ENCODE measurements at regions of chr21 and their contacts with region 1.

Region 1: DNA sequence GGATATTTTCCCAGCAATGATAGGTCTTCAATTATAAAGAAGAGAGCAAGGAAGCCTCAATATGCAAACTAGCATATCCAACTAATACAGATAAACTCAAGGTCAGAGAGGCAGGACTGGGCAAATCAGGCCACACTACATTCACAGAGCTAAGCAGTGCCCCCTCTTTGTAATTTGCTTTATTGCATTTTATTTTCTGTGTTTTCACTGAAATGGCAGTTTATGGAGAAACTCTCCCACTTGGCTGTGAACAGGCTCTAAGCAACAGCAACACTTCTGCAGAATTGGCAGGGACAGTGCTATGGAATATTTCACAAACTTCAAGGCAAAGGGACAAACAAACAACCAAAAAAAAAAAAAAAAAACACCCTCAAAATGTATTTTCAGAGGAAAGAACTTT is 93.4 kb upstream of the SOD1 start:
- DNase-seq: no peak
- H3K4me3 ChIP-seq: no peak overlapping the region
- H3K27ac ChIP-seq: no peak overlapping the region
- H3K4me1 ChIP-seq: no peaks in the 10 kb centered on the region
- H3K27me3 ChIP-seq: peaks cover 0 to 2% (median 0%) of the 10 kb centered on the region in 7 donors
- CTCF ChIP-seq: no peak
- POLR2A ChIP-seq: no peak

Region 2: GRCh38 chr21:31517664-31518414 is 48.2 kb before region 1 on chr21:
- intact Hi-C with region 1: loop called (anchors 5 kb)
- DNase-seq: no peak
- H3K4me3 ChIP-seq: no peak overlapping the region
- H3K27ac ChIP-seq: no peak overlapping the region
- H3K4me1 ChIP-seq: no peaks in the 10 kb centered on the region
- H3K27me3 ChIP-seq: no peaks in the 10 kb centered on the region
- CTCF ChIP-seq: no peak
- POLR2A ChIP-seq: no peak

Measured in spleen (tissue), 13 donors.